ENCODE measurements at regions of chr2 and their contacts with region 1.

Region 1: GRCh38 chr2:119759451-119760236 is at the start of gene PTPN4:
- DNase-seq: peak; percentile 94 to 98 (median 98)
- H3K4me3 ChIP-seq: peak within 1 kb of the TSS; percentile 82 to 88
- H3K4me3 Mint-ChIP-seq: peak within 1 kb of the TSS; percentile 93 to 97 (median 95)
- H3K27ac ChIP-seq: peak within 1 kb of the TSS; percentile 78
- H3K27ac Mint-ChIP-seq: peak within 1 kb of the TSS; percentile 88 to 94 (median 92)
- H3K4me1 ChIP-seq: peaks cover 50% of the 10 kb centered on the region
- H3K4me1 Mint-ChIP-seq: peaks cover 30 to 58% (median 37%) of the 10 kb centered on the region in 4 donors
- H3K27me3 ChIP-seq: no peaks in the 10 kb centered on the region
- H3K27me3 Mint-ChIP-seq: no peaks in the 10 kb centered on the region
- total RNA-seq, gene PTPN4: 83.1 to 88.3 TPM

Region 2: GRCh38 chr2:119476301-119477021 is 283.2 kb before region 1 on chr2:
- CTCF ChIA-PET with region 1: no interaction called
- POLR2A ChIA-PET with region 1: no interaction called
- intact Hi-C with region 1: no loop called
- DNase-seq: peak in 4 of 5 donors; percentile 9 to 19 (median 12)
- H3K4me3 ChIP-seq: no peak overlapping the region
- H3K4me3 Mint-ChIP-seq: no peak overlapping the region
- H3K27ac ChIP-seq: no peak overlapping the region
- H3K27ac Mint-ChIP-seq: no peak overlapping the region
- H3K4me1 ChIP-seq: no peaks in the 10 kb centered on the region
- H3K4me1 Mint-ChIP-seq: no peaks in the 10 kb centered on the region
- H3K27me3 ChIP-seq: no peaks in the 10 kb centered on the region
- H3K27me3 Mint-ChIP-seq: peaks cover 8% of the 10 kb centered on the region in 2 donors

Region 3: GRCh38 chr2:119771331-119771730 is 11.7 kb after region 1 on chr2:
- CTCF ChIA-PET with region 1: interaction called, 4 read pairs
- POLR2A ChIA-PET with region 1: interaction called, 8 read pairs
- intact Hi-C with region 1: loop called (anchors 1 kb)
- DNase-seq: no peak
- H3K4me3 ChIP-seq: no peak overlapping the region
- H3K4me3 Mint-ChIP-seq: peak overlapping the region in 5 of 8 donors; percentile 1 to 47 (median 29)
- H3K27ac ChIP-seq: no peak overlapping the region
- H3K27ac Mint-ChIP-seq: peak overlapping the region in 5 of 7 donors; percentile 2 to 81 (median 38)
- H3K4me1 ChIP-seq: peaks cover 68% of the 10 kb centered on the region
- H3K4me1 Mint-ChIP-seq: peaks cover 22 to 42% (median 33%) of the 10 kb centered on the region in 4 donors
- H3K27me3 ChIP-seq: no peaks in the 10 kb centered on the region
- H3K27me3 Mint-ChIP-seq: no peaks in the 10 kb centered on the region

Region 4: GRCh38 chr2:119929537-119929936 is 169.9 kb after region 1 on chr2:
- CTCF ChIA-PET with region 1: interaction called, 3 read pairs
- POLR2A ChIA-PET with region 1: interaction called, 14 read pairs
- intact Hi-C with region 1: loop called (anchors 5 kb)
- DNase-seq: peak; percentile 50 to 67 (median 58)
- H3K4me3 ChIP-seq: peak overlapping the region; percentile 39 to 51
- H3K4me3 Mint-ChIP-seq: peak overlapping the region; percentile 68 to 91 (median 90)
- H3K27ac ChIP-seq: peak overlapping the region; percentile 61
- H3K27ac Mint-ChIP-seq: peak overlapping the region; percentile 82 to 98 (median 92)
- H3K4me1 ChIP-seq: peaks cover 79% of the 10 kb centered on the region
- H3K4me1 Mint-ChIP-seq: peaks cover 46 to 81% (median 58%) of the 10 kb centered on the region in 4 donors
- H3K27me3 ChIP-seq: no peaks in the 10 kb centered on the region
- H3K27me3 Mint-ChIP-seq: no peaks in the 10 kb centered on the region

Region 5: GRCh38 chr2:120109186-120110061 is 349.8 kb after region 1 on chr2:
- CTCF ChIA-PET with region 1: interaction called, 3 read pairs
- POLR2A ChIA-PET with region 1: no interaction called
- intact Hi-C with region 1: loop called (anchors 2 kb)
- DNase-seq: peak in 4 of 5 donors; percentile 49 to 64 (median 56)
- H3K4me3 ChIP-seq: peak overlapping the region in 1 of 2 donors; percentile 25
- H3K4me3 Mint-ChIP-seq: peak overlapping the region; percentile 49 to 89 (median 80)
- H3K27ac ChIP-seq: peak overlapping the region; percentile 23
- H3K27ac Mint-ChIP-seq: peak overlapping the region in 6 of 7 donors; percentile 45 to 91 (median 64)
- H3K4me1 ChIP-seq: peaks cover 23% of the 10 kb centered on the region
- H3K4me1 Mint-ChIP-seq: peaks cover 18 to 24% (median 21%) of the 10 kb centered on the region in 4 donors
- H3K27me3 ChIP-seq: no peaks in the 10 kb centered on the region
- H3K27me3 Mint-ChIP-seq: peaks cover 0 to 1% of the 10 kb centered on the region in 2 donors